Heart right ventricle (tissue), 16 donors: ENCODE measurements at regions of chr4 and their contacts with region 1.

Region 1: DNA sequence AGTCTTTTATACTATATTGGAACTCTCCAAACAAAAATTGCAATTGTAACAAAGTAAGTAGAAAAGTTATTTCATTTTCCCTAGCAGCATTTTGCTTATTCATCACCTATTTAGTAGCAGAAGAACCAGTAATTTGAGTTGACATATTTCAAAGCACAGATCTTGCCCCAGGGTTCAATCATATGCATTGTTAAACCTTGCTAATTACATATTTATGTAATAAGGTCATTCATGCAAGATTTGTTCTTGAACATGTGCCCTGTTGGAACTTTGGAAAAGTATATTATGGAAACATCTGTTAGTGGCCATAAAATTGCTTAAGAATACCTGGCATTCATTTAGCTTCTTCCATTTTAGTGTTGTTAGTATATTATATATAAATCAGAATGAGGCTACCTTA is 191.7 kb downstream of the TLL1 start:
- DNase-seq: no peak
- ATAC-seq: no peak
- H3K4me3 ChIP-seq: no peak overlapping the region
- H3K27ac ChIP-seq: no peak overlapping the region
- H3K4me1 ChIP-seq: no peaks in the 10 kb centered on the region
- H3K27me3 ChIP-seq: no peaks in the 10 kb centered on the region
- CTCF ChIP-seq: no peak

Region 2: GRCh38 chr4:165541851-165542459 is 522.8 kb before region 1 on chr4:
- intact Hi-C with region 1: no loop called
- DNase-seq: no peak
- ATAC-seq: no peak
- H3K4me3 ChIP-seq: no peak overlapping the region
- H3K27ac ChIP-seq: no peak overlapping the region
- H3K4me1 ChIP-seq: no peaks in the 10 kb centered on the region
- H3K27me3 ChIP-seq: no peaks in the 10 kb centered on the region
- CTCF ChIP-seq: no peak

Region 3: GRCh38 chr4:165921546-165921945 is 143.2 kb before region 1 on chr4:
- intact Hi-C with region 1: loop called in 1 of 10 experiments (anchors 5 kb)
- DNase-seq: no peak
- ATAC-seq: no peak
- H3K4me3 ChIP-seq: no peak overlapping the region
- H3K27ac ChIP-seq: no peak overlapping the region
- H3K4me1 ChIP-seq: no peaks in the 10 kb centered on the region
- H3K27me3 ChIP-seq: no peaks in the 10 kb centered on the region
- CTCF ChIP-seq: no peak

Region 4: GRCh38 chr4:166121897-166122296 is 57.2 kb after region 1 on chr4:
- intact Hi-C with region 1: no loop called
- DNase-seq: peak in 1 of 2 donors; percentile 16
- ATAC-seq: peak in 7 of 8 donors; percentile 84 to 96 (median 89)
- H3K4me3 ChIP-seq: peak overlapping the region in 4 of 10 donors; percentile 1 to 9 (median 4)
- H3K27ac ChIP-seq: no peak overlapping the region
- H3K4me1 ChIP-seq: no peaks in the 10 kb centered on the region
- H3K27me3 ChIP-seq: no peaks in the 10 kb centered on the region
- CTCF ChIP-seq: no peak

Region 5: DNA sequence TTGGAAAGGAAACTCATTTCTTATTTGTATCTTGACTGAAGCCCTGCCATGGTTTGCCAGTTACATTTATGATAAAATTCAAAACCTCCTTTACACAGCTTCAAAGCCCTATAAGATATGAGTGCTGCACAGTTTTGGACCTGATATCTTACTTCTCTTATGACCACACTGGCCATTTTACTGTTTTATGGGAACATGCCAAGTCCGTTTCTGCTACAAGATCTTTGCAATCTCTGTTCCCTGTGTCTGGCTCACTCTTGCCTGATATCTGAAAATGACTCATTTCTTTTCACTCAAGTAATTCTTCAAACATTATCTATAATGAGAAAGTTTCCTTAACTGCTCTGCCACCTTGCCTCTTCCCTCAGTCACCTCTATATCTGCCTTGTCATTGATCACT is 922.3 kb after region 1 on chr4:
- intact Hi-C with region 1: no loop called
- DNase-seq: no peak
- ATAC-seq: no peak
- H3K4me3 ChIP-seq: no peak overlapping the region
- H3K27ac ChIP-seq: no peak overlapping the region
- H3K4me1 ChIP-seq: no peaks in the 10 kb centered on the region
- H3K27me3 ChIP-seq: no peaks in the 10 kb centered on the region
- CTCF ChIP-seq: no peak